AG04450 (cell line): ENCODE measurements at regions of chr9 and their contacts with region 1.

Region 1: GRCh38 chr9:70111042-70111602 is 67.5 kb downstream of the MAMDC2 start:
- DNase-seq: peak; percentile 53
- H3K4me3 ChIP-seq: no peak overlapping the region
- H3K27ac ChIP-seq: no peak overlapping the region
- H3K27me3 ChIP-seq: no peaks in the 10 kb centered on the region
- CTCF ChIP-seq: peak; percentile 89

Region 2: DNA sequence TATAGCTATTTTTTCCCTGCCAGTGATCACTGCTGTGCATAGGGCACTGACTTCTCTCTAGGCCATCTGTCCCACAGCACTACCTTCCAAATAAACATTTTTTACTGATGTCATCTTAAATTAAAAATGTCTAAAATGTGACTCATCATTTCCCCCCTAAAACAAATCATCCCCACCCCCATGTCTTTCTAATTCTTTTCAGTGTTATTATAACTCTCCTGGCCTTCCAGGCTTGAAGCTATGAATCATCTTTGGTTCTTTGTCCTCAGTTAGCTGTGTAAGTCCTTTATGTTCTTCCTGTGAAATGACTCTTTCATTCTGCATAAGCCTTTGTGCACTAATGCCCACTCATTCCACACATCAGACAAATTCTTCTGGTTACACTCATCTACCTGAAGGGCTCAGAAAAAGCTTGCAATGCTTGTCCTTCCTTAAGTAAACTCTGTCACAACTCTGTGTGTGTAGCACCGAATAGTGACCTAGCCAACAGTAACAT is 212.4 kb before region 1 on chr9:
- CTCF ChIA-PET with region 1: interaction called, 17 read pairs
- POLR2A ChIA-PET with region 1: no interaction called
- DNase-seq: peak; percentile 36
- H3K4me3 ChIP-seq: no peak overlapping the region
- H3K27ac ChIP-seq: no peak overlapping the region
- H3K27me3 ChIP-seq: no peaks in the 10 kb centered on the region
- CTCF ChIP-seq: no peak

Region 3: DNA sequence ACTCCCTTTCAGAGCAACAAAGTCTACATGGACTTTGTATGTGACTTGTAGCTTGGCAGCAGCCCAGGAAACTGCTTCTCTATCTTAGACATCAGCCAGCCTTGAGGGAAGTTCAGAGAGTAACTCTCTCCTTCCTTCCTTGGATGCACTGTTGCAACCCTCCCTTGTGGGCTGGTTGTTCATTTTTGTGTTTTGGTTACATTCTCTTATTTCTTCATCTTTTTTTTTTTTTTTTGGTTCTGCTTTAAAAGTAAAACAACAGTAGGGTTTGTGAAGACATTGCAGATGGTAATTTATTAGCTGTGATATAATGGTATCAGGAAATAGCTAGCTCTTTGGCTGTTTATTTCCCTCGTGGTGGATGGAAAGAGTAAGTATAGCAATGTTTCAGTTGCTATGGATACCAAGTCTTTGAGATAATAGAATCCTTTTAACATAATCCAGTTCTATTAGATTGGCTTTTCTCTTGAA is 165.4 kb before region 1 on chr9:
- CTCF ChIA-PET with region 1: interaction called, 13 read pairs
- POLR2A ChIA-PET with region 1: no interaction called
- DNase-seq: peak; percentile 66
- H3K4me3 ChIP-seq: no peak overlapping the region
- H3K27ac ChIP-seq: peak overlapping the region; percentile 40
- H3K27me3 ChIP-seq: no peaks in the 10 kb centered on the region
- CTCF ChIP-seq: 0 out of 2 replicates have a peak, but pooled peaks have one; percentile 5

Region 4: DNA sequence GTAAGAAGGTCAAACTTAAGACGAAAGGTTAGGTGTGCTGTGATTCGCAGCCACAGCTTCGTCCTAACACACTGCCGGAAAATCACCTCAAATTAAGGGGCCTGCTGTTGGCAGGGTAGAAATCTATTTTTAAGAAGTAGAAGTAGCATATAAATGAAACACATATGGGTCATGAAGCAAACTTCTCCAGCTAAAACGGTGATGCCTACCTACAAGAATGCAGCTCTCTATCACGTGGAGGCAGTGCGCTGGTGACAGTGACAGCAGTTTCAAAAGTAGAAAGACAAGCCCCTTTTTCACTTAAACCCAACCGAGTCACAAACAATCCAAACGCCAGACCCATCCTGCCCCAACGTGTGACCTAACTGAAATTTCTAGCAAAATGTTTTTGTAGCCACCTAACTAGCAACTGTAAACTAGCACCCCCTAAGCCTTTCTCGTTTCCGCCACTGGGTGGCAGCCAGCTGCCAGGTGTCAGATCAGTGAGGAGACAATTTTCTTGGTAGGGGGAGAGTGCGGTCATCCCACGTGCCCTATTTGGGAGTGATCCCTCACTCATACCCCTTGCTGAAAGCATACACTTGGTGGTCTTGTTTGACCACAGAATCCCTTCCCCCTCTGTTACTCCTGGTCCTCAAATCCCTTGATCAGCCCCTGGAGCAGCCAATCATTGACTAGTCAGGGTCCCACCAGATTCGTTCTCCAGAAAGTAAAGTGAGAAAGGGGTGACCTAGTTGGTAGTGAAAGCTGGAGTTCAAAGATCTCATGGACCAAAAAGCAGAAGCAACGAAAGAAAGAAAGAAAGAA is 139.3 kb before region 1 on chr9:
- CTCF ChIA-PET with region 1: interaction called, 213 read pairs
- POLR2A ChIA-PET with region 1: no interaction called
- DNase-seq: no peak
- H3K4me3 ChIP-seq: no peak overlapping the region
- H3K27ac ChIP-seq: no peak overlapping the region
- H3K27me3 ChIP-seq: no peaks in the 10 kb centered on the region
- CTCF ChIP-seq: peak; percentile 95

Region 5: GRCh38 chr9:70093944-70094343 is 17.2 kb before region 1 on chr9:
- CTCF ChIA-PET with region 1: interaction called, 55 read pairs
- POLR2A ChIA-PET with region 1: no interaction called
- DNase-seq: no peak
- H3K4me3 ChIP-seq: no peak overlapping the region
- H3K27ac ChIP-seq: no peak overlapping the region
- H3K27me3 ChIP-seq: no peaks in the 10 kb centered on the region
- CTCF ChIP-seq: no peak

Region 6: DNA sequence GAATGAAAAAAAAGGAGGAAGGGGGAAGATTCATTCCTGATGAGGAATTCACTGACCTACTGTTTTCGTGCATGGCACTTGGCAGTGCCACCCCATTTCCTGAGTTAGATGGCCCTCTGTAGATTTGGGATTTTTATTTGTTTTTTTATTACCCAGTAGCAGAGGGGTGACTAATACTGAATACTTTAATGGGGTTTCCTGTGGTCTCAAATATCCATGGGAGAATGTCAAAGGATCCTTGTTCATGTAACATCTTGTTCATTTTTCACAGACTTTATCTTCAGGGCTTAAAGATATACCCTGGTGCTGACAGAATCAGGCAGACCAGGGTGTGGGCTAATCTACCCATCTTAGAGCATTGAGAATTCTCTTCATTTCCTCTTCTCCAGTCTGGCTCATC is 25.5 kb after region 1 on chr9:
- CTCF ChIA-PET with region 1: interaction called, 11 read pairs
- POLR2A ChIA-PET with region 1: interaction called, 3 read pairs
- DNase-seq: no peak
- H3K4me3 ChIP-seq: no peak overlapping the region
- H3K27ac ChIP-seq: no peak overlapping the region
- H3K27me3 ChIP-seq: no peaks in the 10 kb centered on the region
- CTCF ChIP-seq: no peak

Region 7: GRCh38 chr9:70553707-70554673 is 442.9 kb after region 1 on chr9:
- CTCF ChIA-PET with region 1: no interaction called
- POLR2A ChIA-PET with region 1: no interaction called
- DNase-seq: no peak
- H3K4me3 ChIP-seq: no peak overlapping the region
- H3K27ac ChIP-seq: no peak overlapping the region
- H3K27me3 ChIP-seq: no peaks in the 10 kb centered on the region
- CTCF ChIP-seq: no peak